Esophagus muscularis mucosa (tissue), 4 donors: ENCODE measurements at regions of chrX and their contacts with region 1.

Region 1: GRCh38 chrX:24241822-24242648 is 71.8 kb downstream of the SUPT20HL2 start:
- DNase-seq: no peak
- H3K4me3 ChIP-seq: no peak overlapping the region
- H3K27ac ChIP-seq: peak overlapping the region in 1 of 4 donors; percentile 42
- H3K4me1 ChIP-seq: peaks cover 0 to 32% (median 8%) of the 10 kb centered on the region in 4 donors
- H3K27me3 ChIP-seq: no peaks in the 10 kb centered on the region
- CTCF ChIP-seq: peak; percentile 33 to 44 (median 38)
- EP300 ChIP-seq: no peak
- POLR2A ChIP-seq: no peak

Region 2: DNA sequence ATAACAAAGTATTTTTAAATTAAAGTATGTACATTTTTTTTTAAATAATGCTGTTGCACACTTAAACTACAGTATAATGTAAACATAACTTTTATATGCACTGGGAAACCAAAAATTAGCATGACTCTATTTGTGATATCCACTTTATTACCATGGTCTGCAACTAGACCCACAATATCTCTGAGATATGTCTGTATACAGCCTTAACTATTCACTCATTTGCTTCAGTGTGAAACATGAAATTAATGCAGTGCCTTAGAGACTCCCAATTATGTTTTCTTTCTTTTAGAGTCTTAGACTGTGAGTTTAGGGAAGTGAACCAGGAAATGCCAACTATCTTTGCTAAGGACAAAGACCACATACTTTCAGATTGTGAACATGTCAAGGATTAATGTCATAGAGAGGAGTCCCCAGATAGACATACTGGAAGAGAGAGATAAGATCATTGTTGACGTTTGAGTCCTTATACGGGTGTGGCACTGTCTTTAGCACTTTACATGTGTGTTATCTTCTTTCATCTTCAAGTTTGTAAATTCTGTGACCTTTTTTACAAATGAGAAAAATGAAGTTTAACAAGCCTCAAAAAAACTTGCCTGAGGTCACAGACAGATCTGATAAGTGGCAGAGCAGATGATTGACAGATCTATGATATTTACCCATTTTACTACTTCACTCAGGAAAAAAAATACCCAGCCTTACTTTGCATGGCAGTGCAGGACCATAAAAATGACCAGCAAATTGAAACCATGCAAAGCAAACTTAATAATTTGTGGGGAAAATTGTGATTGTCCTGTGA is 310.9 kb before region 1 on chrX:
- intact Hi-C with region 1: no loop called
- DNase-seq: no peak
- H3K4me3 ChIP-seq: no peak overlapping the region
- H3K27ac ChIP-seq: no peak overlapping the region
- H3K4me1 ChIP-seq: no peaks in the 10 kb centered on the region
- H3K27me3 ChIP-seq: peaks cover 0 to 6% (median 0%) of the 10 kb centered on the region in 4 donors
- CTCF ChIP-seq: no peak
- EP300 ChIP-seq: no peak
- POLR2A ChIP-seq: no peak

Region 3: GRCh38 chrX:24081661-24082264 is 160.3 kb before region 1 on chrX:
- intact Hi-C with region 1: loop called (anchors 2 kb)
- DNase-seq: no peak
- H3K4me3 ChIP-seq: no peak overlapping the region
- H3K27ac ChIP-seq: no peak overlapping the region
- H3K4me1 ChIP-seq: no peaks in the 10 kb centered on the region
- H3K27me3 ChIP-seq: no peaks in the 10 kb centered on the region
- CTCF ChIP-seq: peak; percentile 30 to 45 (median 36)
- EP300 ChIP-seq: no peak
- POLR2A ChIP-seq: no peak

Region 4: GRCh38 chrX:24282381-24283126 is 40.5 kb after region 1 on chrX:
- intact Hi-C with region 1: no loop called
- DNase-seq: no peak
- H3K4me3 ChIP-seq: peak overlapping the region in 2 of 4 donors; percentile 6 to 9
- H3K27ac ChIP-seq: peak overlapping the region; percentile 50 to 72 (median 62)
- H3K4me1 ChIP-seq: peaks cover 0 to 27% (median 16%) of the 10 kb centered on the region in 4 donors
- H3K27me3 ChIP-seq: peaks cover 0 to 4% (median 0%) of the 10 kb centered on the region in 4 donors
- CTCF ChIP-seq: no peak
- EP300 ChIP-seq: no peak
- POLR2A ChIP-seq: no peak

Region 5: DNA sequence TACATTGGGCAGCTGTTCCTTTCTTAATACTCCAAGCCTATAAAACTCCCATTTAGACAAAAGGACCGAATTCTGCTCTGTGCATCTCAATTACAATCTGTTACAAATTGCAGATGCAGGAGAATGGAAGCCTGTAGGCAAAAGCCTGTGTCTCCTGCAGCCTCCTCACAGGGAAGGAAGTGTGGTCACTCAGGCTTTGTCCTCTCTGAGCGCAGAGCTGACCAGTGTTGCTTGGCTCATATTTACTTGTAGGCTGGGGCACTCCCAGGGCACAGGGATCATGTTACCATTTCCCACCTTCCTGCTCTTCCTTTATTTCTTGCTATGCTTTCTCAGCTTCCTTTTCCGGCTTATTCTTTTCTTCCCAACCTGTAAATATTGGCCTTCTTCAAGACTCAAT is 56.2 kb after region 1 on chrX:
- intact Hi-C with region 1: no loop called
- DNase-seq: no peak
- H3K4me3 ChIP-seq: no peak overlapping the region
- H3K27ac ChIP-seq: no peak overlapping the region
- H3K4me1 ChIP-seq: peaks cover 0 to 9% (median 8%) of the 10 kb centered on the region in 4 donors
- H3K27me3 ChIP-seq: no peaks in the 10 kb centered on the region
- CTCF ChIP-seq: no peak
- EP300 ChIP-seq: no peak
- POLR2A ChIP-seq: no peak

Region 6: DNA sequence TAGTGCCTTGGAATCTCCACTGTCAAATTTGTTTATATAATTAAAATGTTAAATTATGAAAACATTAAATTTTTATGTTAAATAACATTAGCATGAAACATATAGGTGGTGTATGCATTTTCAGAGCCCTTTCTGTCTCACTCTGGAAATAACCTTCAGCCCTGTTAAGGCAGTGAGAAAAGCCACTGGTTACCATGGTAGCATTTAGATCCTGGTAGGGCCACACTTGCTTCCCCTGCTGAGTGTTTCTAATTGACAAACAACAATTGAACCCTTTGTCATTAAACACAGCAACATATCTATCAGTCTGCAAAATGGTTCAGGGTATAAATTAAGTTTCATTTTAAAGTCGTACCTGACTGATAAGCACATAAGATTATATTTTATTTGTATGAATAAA is 286.6 kb after region 1 on chrX:
- intact Hi-C with region 1: no loop called
- DNase-seq: no peak
- H3K4me3 ChIP-seq: no peak overlapping the region
- H3K27ac ChIP-seq: no peak overlapping the region
- H3K4me1 ChIP-seq: no peaks in the 10 kb centered on the region
- H3K27me3 ChIP-seq: no peaks in the 10 kb centered on the region
- CTCF ChIP-seq: no peak
- EP300 ChIP-seq: no peak
- POLR2A ChIP-seq: no peak